ENCODE measurements at regions of chr1 and their contacts with region 1.

Region 1: GRCh38 chr1:244234009-244234643 is 183.0 kb downstream of the ZBTB18 start:
- DNase-seq: no peak
- H3K4me3 ChIP-seq: no peak overlapping the region
- H3K27ac ChIP-seq: no peak overlapping the region
- H3K4me1 ChIP-seq: peaks cover 0 to 8% (median 1%) of the 10 kb centered on the region in 4 experiments; a peak in 3 of 7 replicates
- H3K27me3 ChIP-seq: no peaks in the 10 kb centered on the region; a peak in 1 of 7 replicates
- CTCF ChIP-seq: peak in 2 of 3 experiments; percentile 28 to 42; a peak in 2 of 4 replicates
- EP300 ChIP-seq: no peak
- POLR2A ChIP-seq: no peak
- RAD21 ChIP-seq: peak; percentile 41 to 57; a peak in 3 of 4 replicates

Region 2: DNA sequence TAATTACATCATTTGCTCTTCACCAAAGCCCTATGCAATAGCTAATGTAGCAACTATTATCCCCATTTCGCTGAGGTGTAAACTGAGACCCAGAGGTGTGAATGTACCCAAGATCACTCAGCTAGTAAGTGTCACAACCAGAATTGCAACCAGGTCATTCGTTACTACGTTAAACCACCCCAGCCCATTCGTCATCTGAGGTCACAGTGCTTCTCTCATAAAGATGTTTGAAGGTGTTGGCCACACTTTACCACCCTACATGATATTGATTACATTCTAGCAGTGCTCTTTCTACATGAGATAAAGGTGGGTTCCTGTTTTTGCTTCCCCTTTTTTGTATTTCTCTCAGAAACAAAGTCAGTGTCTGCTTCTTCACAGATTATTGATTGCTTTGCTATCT is 12.2 kb after region 1 on chr1:
- CTCF ChIA-PET with region 1: interaction called, 10 read pairs
- POLR2A ChIA-PET with region 1: no interaction called
- DNase-seq: no peak
- H3K4me3 ChIP-seq: no peak overlapping the region
- H3K27ac ChIP-seq: no peak overlapping the region
- H3K4me1 ChIP-seq: peaks cover 0 to 4% (median 0%) of the 10 kb centered on the region in 4 experiments; a peak in 1 of 7 replicates
- H3K27me3 ChIP-seq: no peaks in the 10 kb centered on the region
- CTCF ChIP-seq: no peak
- EP300 ChIP-seq: no peak
- POLR2A ChIP-seq: no peak
- RAD21 ChIP-seq: no peak

Region 3: DNA sequence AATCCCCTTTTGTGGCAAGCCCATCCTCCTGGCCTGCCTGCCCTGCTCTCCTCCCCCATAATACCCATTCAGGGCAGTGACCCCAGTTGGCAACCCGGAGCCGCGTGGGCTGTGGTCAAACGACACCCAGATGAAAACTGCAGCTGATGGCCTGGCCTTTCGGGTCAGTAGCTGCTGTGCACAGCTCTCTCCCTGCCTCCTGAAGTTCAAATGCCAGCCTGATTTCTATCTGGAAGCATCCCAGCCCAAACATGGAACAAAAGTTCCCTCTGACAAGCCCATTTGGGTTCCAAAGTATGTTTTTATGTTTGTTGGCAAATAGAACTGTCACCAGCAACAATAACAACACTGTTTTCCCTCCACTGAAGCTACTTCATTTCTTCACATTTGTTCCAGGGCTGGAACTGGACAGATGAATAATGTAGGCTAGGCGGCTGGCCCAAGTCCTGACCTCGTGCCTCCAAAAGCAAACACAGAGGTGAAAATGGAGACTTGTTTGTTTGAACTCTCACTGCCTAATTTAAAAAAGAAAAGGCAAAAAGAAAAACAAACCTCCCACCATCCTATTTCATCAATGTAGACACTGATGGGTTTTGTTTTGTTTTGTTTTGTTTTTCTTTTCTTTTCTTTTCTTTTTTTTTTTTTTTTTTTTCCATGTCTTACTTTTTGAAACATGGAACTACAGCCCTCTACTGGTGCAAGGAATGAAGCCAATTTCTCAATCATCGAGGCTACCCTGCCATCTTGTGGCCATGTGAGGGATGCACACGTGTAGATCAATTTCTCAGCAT is 38.5 kb after region 1 on chr1:
- CTCF ChIA-PET with region 1: interaction called, 11 read pairs
- POLR2A ChIA-PET with region 1: no interaction called
- DNase-seq: peak; percentile 59 to 83
- H3K4me3 ChIP-seq: no peak overlapping the region
- H3K27ac ChIP-seq: no peak overlapping the region
- H3K4me1 ChIP-seq: no peaks in the 10 kb centered on the region
- H3K27me3 ChIP-seq: no peaks in the 10 kb centered on the region
- CTCF ChIP-seq: peak; percentile 72 to 99 (median 98)
- EP300 ChIP-seq: no peak
- POLR2A ChIP-seq: no peak
- RAD21 ChIP-seq: peak; percentile 97 to 100